SK-N-SH (cell line): ENCODE measurements at regions of chr17 and their contacts with region 1.

Region 1: DNA sequence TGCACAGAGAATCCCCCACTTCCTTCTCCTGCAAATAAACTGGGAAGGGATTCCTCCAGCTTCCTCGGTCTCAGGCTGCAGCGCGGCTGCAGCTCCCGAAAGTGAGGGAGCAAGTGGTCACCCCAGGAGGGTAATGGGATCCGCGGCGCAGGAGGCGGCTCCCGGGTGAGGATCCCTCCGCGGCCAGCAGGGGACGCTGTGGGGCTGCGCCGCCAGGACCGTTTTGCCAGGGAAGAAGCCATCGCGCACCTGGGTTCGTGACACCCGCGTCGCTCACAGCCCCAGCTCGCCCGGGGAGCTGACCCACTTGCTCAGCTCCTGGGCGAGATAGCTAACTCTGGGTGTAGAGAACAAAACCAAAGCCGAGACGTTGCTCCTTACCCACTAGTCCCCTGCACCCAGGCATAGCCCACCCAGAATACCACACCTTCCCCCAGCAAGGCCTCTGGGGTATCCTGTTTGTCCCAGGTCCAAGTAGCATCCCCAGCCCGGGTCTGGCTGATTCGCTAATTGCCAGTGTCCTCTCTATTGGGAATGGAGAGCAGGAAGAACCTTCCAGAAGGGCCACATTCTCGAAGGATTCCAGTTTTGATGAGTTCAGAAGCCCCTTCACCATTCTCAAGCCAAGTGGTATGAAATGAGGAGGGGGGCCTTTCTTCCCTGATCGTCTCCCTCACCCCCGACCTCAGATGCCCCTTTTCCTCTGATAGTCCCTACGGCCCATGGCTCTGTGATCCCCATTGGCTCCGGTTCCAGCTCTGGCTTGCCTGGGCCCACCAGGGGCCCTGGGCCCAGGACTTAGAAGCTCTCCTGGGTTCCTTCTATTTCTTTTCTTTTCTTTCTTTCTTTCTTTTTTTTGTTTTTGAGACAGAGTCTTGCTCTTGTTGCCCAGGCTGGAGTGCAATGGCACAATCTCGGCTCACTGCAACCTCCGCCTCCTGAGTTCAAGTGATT is 14.1 kb downstream of the CYGB start:
- DNase-seq: peak; percentile 95
- H3K4me3 ChIP-seq: peak overlapping the region in 1 of 2 experiments; percentile 38; a peak in 1 of 4 replicates
- H3K27ac ChIP-seq: no peak overlapping the region
- H3K4me1 ChIP-seq: peaks cover 0 to 26% of the 10 kb centered on the region in 2 experiments; a peak in 1 of 4 replicates
- H3K27me3 ChIP-seq: peaks cover 17% of the 10 kb centered on the region; the same call in 1 of the 2 replicates
- CTCF ChIP-seq: peak; percentile 100
- EP300 ChIP-seq: no peak
- RAD21 ChIP-seq: peak; percentile 99

Region 2: DNA sequence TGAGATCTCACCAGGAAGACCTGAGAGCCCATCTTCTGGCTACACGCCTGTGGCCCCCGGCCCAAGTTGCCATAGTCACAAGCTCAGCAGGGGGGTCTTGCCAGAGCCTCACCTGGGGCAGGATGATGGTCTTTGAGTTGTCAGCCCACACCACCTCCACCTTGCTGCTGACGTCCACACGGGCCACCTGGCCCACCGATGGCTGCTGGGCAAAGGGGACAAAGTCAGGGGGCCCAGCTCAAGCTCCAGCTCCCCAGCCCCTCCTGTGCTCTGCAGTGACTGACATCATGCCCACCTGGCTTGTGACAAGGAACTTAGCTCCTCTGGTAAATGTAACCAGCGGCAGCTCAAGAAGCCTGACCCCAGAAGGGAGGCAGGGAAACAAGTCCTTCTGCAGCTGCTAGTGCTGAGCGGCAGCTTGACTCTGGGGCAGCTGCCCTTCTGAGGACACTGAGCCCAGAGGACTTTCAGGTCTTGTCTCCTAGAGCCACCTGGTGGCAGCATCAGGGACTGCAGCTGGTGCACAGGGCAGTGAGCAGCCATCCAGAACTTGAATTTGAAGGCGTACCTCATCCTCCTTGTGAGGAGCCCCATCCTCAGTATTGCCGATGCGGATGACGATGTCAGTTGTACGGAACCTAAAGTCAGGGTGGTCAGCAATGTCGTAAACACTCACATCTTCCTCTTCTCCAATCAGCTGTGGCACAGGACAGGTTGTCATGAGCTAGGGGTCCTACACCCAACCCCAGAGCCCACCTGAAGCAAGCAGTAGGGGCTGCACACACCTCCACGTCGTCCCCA is 125.5 kb before region 1 on chr17:
- CTCF ChIA-PET with region 1: interaction called, 12 read pairs
- POLR2A ChIA-PET with region 1: no interaction called
- DNase-seq: peak; percentile 92
- H3K4me3 ChIP-seq: no peak overlapping the region; a peak in 1 of 4 replicates
- H3K27ac ChIP-seq: no peak overlapping the region; a peak in 1 of 4 replicates
- H3K4me1 ChIP-seq: peaks cover 0 to 3% of the 10 kb centered on the region in 2 experiments; a peak in 1 of 4 replicates
- H3K27me3 ChIP-seq: no peaks in the 10 kb centered on the region
- CTCF ChIP-seq: peak; percentile 99
- EP300 ChIP-seq: no peak
- RAD21 ChIP-seq: peak; percentile 96

Region 3: GRCh38 chr17:76458580-76459490 is 64.5 kb before region 1 on chr17:
- CTCF ChIA-PET with region 1: interaction called, 35 read pairs
- POLR2A ChIA-PET with region 1: no interaction called
- DNase-seq: peak; percentile 79
- H3K4me3 ChIP-seq: no peak overlapping the region
- H3K27ac ChIP-seq: no peak overlapping the region
- H3K4me1 ChIP-seq: no peaks in the 10 kb centered on the region; a peak in 1 of 4 replicates
- H3K27me3 ChIP-seq: no peaks in the 10 kb centered on the region
- CTCF ChIP-seq: peak; percentile 51
- EP300 ChIP-seq: no peak
- RAD21 ChIP-seq: peak; percentile 81

Region 4: DNA sequence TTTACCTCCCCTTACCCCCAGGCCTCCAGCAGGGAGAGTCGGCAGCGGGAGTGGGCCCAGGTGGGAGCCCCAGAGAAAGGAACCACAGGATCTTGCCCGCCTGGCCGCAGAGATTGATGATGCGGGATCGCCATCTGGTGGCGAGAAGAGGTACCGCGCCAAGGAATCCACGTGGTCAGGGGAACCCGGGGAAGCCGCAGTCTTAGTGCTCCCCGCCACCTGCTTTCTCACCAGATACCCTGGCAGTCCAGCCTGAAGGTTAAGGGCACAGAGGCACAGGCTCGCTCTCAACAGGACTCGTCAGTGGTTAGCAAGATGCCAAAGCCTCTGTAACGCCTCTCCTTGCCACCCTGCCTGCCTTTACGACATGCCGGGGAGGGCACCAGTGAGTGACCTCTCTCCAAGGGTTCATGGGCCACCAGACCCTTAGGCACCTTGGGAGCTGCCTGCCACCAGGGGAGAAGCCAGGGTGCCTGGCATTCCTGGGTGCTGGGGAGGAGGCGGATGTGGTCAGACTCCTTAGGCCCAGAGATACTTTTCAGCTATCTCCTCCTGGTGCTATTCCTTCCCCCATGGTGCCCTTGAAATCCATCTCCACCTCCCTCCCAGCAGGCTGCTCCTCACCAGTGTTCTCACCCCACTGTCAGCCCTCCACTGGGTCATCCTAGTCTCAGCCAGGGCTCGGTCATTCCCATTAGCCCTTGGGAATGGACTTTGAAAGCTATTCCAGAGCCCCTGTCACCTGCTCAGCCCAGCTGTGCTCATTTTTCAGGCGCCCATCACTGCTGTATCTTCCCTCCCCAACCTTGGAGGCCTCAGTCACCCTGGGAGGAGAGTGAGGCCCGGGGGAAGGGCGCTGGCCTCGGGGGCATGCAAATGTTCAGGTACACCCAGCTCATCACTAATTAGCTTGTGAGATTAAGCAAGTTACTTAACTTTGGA is 16.7 kb before region 1 on chr17:
- CTCF ChIA-PET with region 1: interaction called, 201 read pairs
- POLR2A ChIA-PET with region 1: interaction called, 3 read pairs
- DNase-seq: peak; percentile 95
- H3K4me3 ChIP-seq: no peak overlapping the region; a peak in 1 of 4 replicates
- H3K27ac ChIP-seq: no peak overlapping the region
- H3K4me1 ChIP-seq: peaks cover 0 to 14% of the 10 kb centered on the region in 2 experiments; a peak in 1 of 4 replicates
- H3K27me3 ChIP-seq: peaks cover 9% of the 10 kb centered on the region
- CTCF ChIP-seq: peak; percentile 96
- EP300 ChIP-seq: no peak
- RAD21 ChIP-seq: peak; percentile 99

Region 5: DNA sequence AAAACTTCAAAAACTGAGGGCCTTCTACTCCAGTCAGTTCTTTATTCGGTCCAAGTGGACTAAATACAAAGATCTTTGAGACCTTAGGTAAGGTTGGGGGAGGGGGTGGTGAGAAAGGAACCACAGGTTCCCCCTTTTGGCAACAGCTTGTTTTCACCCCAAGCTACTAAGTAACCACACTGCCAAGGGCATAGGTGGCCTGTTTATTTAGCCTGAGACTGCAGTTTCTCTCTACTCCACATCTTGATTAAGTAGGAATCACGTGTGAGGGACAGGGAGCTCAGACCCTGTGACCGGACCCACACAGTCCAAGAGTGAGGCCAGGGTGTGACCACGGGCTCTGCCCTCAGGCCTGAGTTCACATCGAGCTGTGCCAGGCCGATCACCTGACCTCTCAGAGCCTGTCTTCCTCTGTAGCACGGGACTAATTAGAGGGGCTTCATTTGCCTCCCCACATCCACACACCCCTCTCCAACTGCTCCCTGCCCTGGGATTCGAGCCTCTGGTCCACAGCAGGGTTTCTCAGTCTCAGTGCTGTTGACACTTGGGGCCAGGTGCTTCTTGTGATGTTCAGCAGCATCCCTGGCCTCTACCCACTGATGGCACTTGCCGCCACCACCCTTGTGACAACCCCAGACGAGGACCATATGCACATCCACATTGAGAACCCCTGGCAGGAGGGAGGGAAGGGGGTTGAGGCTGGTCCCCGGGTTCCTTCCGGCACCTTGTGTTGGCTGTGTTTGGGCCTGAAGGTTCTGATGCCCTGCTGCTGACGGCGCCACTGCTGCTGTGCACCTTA is 44.5 kb after region 1 on chr17:
- CTCF ChIA-PET with region 1: interaction called, 22 read pairs
- POLR2A ChIA-PET with region 1: no interaction called
- DNase-seq: peak; percentile 45
- H3K4me3 ChIP-seq: no peak overlapping the region
- H3K27ac ChIP-seq: no peak overlapping the region; a peak in 1 of 4 replicates
- H3K4me1 ChIP-seq: peaks cover 1 to 8% of the 10 kb centered on the region in 2 experiments; a peak in 2 of 4 replicates
- H3K27me3 ChIP-seq: no peaks in the 10 kb centered on the region
- CTCF ChIP-seq: no peak
- EP300 ChIP-seq: no peak
- RAD21 ChIP-seq: no peak

Region 6: GRCh38 chr17:76631829-76632565 is 108.6 kb after region 1 on chr17:
- CTCF ChIA-PET with region 1: interaction called, 111 read pairs
- POLR2A ChIA-PET with region 1: no interaction called
- DNase-seq: no peak
- H3K4me3 ChIP-seq: no peak overlapping the region
- H3K27ac ChIP-seq: no peak overlapping the region
- H3K4me1 ChIP-seq: peaks cover 10 to 14% of the 10 kb centered on the region in 2 experiments
- H3K27me3 ChIP-seq: no peaks in the 10 kb centered on the region
- CTCF ChIP-seq: no peak
- EP300 ChIP-seq: no peak
- RAD21 ChIP-seq: no peak

Region 7: DNA sequence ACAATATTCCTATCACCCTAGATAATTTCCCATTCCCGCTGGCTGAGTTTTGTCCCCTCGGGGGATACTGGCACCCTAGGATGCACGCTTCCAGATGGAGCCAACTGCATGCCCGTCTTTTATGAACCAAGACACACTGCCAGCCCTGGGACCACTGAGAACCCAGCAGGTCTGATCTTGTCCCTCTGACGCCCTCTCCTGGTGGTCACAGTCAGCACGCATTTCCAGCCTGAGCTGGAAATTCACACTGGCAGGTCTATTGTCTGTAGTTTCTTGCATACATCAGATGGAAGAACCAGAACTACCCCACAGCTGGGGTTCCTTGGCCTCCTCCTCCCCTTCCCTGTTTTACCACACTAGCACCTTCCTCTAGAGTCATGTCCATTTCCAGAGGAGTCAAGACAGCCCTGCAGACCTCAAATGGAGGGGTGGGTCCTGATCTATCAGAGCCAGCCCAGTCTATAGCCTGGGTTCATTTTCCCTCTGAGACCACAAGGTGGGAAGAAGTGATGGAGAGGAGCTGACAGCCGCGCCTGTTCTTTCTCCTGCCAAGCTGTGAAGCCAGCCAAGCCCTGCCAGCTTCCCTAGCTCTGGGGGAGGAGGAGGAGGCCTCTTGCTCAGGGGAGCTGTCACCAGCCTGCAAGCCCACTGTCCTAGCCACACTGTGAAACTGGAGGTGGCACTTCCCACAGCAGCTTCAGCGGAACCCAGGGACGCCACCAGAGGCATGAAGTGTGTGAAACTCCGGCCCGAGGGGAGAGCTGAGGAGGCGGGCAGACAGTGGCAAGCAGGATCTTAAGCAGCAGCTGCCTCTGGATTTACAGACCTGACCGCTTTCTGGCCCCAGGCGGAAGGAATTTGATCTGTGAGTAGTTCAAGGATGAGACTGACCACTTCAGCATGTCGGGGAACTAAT is 158.1 kb after region 1 on chr17:
- CTCF ChIA-PET with region 1: interaction called, 80 read pairs
- POLR2A ChIA-PET with region 1: interaction called, 6 read pairs
- DNase-seq: peak; percentile 89
- H3K4me3 ChIP-seq: no peak overlapping the region; a peak in 1 of 4 replicates
- H3K27ac ChIP-seq: peak overlapping the region in 1 of 2 experiments; percentile 23; a peak in 1 of 4 replicates
- H3K4me1 ChIP-seq: peaks cover 0 to 23% of the 10 kb centered on the region in 2 experiments; a peak in 1 of 4 replicates
- H3K27me3 ChIP-seq: no peaks in the 10 kb centered on the region
- CTCF ChIP-seq: peak; percentile 95
- EP300 ChIP-seq: no peak
- RAD21 ChIP-seq: peak; percentile 95

Region 8: GRCh38 chr17:76873856-76874255 is 350.5 kb after region 1 on chr17:
- CTCF ChIA-PET with region 1: no interaction called
- POLR2A ChIA-PET with region 1: no interaction called
- DNase-seq: no peak
- H3K4me3 ChIP-seq: no peak overlapping the region
- H3K27ac ChIP-seq: no peak overlapping the region
- H3K4me1 ChIP-seq: peaks cover 9 to 30% of the 10 kb centered on the region in 2 experiments; a peak in 3 of 4 replicates
- H3K27me3 ChIP-seq: no peaks in the 10 kb centered on the region
- CTCF ChIP-seq: no peak
- EP300 ChIP-seq: no peak
- RAD21 ChIP-seq: no peak